AG04449 (cell line): ENCODE measurements at regions of chr11 and their contacts with region 1.

Region 1: GRCh38 chr11:77127232-77127911 is 674 bp upstream of the MYO7A start:
- DNase-seq: no peak
- H3K4me3 ChIP-seq: peak overlapping the region; percentile 60
- CTCF ChIP-seq: peak; percentile 94

Region 2: GRCh38 chr11:77091146-77091940 is 36.0 kb before region 1 on chr11:
- CTCF ChIA-PET with region 1: interaction called, 12 read pairs
- POLR2A ChIA-PET with region 1: no interaction called
- DNase-seq: no peak
- H3K4me3 ChIP-seq: no peak overlapping the region
- CTCF ChIP-seq: peak; percentile 97

Region 3: GRCh38 chr11:77140231-77140851 is 13.0 kb after region 1 on chr11:
- CTCF ChIA-PET with region 1: interaction called, 41 read pairs
- POLR2A ChIA-PET with region 1: interaction called, 3 read pairs
- DNase-seq: no peak
- H3K4me3 ChIP-seq: no peak overlapping the region
- CTCF ChIP-seq: no peak

Region 4: DNA sequence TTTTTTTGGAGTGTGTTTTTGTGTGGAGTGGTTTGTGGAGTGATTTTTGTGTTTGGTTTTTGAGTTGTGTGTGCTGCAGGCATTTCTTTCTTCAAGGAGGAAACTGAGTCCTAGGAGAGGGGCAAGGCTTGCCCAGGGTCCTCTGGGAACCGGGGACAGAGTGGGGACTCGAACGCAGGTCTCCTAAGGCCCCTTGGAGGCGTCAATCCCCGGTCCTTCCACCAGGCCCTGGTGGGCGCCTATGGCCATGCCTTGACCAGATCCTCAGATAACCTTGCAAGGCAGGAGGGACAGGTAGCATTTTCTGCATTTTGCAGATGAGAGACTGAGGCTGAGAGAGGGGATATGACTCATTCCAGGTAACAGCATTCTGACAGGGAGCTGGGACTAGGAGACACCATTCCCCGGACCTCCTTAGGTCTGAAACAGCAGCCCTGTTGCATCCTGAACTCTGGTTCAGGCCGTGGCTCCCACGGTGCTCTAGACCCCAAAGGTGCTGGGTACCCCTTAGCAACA is 39.8 kb after region 1 on chr11:
- CTCF ChIA-PET with region 1: interaction called, 22 read pairs
- POLR2A ChIA-PET with region 1: no interaction called
- DNase-seq: no peak
- H3K4me3 ChIP-seq: no peak overlapping the region
- CTCF ChIP-seq: no peak

Region 5: DNA sequence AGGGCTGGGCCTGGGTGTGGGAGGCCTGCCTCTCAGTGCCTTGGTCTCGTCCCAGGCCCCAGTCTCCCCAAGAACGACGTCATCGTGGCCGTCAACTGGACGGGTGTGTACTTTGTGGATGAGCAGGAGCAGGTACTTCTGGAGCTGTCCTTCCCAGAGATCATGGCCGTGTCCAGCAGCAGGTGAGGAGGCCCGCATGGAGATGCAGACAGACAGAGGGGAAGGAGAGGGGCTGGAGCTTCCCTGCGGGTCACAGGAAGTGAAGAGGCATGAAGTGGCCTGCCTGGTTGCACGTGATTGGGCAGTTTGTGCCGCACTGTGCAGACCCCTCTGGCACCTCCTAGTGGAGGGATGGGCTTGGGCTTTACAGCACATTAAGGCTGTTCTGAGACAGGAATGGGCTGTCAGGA is 71.1 kb after region 1 on chr11:
- CTCF ChIA-PET with region 1: interaction called, 13 read pairs
- POLR2A ChIA-PET with region 1: no interaction called
- DNase-seq: no peak
- H3K4me3 ChIP-seq: no peak overlapping the region
- CTCF ChIP-seq: peak; percentile 12

Region 6: GRCh38 chr11:77602381-77603088 is 475.2 kb after region 1 on chr11:
- CTCF ChIA-PET with region 1: interaction called, 18 read pairs
- POLR2A ChIA-PET with region 1: no interaction called
- DNase-seq: peak; percentile 59
- H3K4me3 ChIP-seq: no peak overlapping the region
- CTCF ChIP-seq: no peak